Breast epithelium (tissue), 4 donors: ENCODE measurements at regions of chr1 and their contacts with region 1.

Region 1: DNA sequence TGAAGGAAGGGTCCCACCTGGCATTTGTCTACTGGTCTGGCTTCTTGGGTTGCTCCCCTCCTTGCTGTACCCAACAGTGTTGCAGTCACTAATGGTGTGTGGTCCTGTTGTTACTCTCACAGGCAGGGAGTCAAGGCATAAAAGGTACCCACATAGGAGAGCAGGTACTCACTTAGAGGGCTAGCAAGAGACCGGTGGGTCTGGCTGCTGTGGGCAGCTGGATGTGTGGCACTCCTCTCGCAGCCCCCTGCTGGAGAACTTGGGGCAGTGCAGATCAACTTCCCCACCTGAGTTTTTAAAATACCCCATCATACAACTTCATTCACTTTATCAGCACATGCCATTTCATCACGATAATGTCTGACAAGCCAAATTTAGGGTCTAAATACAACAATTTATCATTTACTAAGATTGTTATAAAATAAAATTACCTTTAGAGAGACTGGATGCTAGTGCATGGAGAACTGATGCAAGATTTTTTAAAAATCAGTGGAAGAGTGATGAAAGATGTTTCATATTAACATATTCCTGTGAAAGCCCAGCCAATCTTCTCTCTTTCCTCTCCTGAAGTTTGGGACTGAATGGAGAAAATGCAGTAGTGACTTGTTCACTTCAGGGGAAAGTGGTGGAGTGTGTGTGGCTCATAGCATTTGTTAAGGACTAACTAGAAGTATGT is 42.8 kb downstream of the ACP6 start:
- DNase-seq: no peak
- H3K4me3 ChIP-seq: no peak overlapping the region
- H3K27ac ChIP-seq: no peak overlapping the region
- H3K4me1 ChIP-seq: no peaks in the 10 kb centered on the region
- H3K27me3 ChIP-seq: no peaks in the 10 kb centered on the region
- CTCF ChIP-seq: peak; percentile 76 to 79 (median 79)
- POLR2A ChIP-seq: no peak

Region 2: DNA sequence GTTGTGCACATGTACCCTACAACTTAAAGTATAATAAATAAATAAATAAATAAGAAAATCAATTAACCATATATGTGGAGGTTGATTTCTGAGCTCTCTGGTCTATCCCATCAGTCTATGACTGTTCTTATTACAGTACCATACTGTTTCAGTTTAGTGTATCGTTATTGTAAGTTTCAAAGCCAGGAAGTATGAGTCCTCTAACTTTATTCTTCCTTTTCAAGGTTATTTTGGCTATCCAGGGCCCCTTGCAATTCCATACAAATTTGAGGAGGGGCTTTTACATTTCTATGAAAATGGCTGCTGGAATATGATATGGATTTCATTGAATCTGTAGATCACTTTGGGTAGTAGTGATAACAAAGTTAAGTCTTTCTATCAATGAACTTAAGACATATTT is 183.2 kb before region 1 on chr1:
- intact Hi-C with region 1: no loop called
- DNase-seq: no peak
- H3K4me3 ChIP-seq: no peak overlapping the region
- H3K27ac ChIP-seq: no peak overlapping the region
- H3K4me1 ChIP-seq: no peaks in the 10 kb centered on the region
- H3K27me3 ChIP-seq: no peaks in the 10 kb centered on the region
- CTCF ChIP-seq: no peak
- POLR2A ChIP-seq: no peak

Region 3: GRCh38 chr1:147504801-147505311 is 122.7 kb before region 1 on chr1:
- intact Hi-C with region 1: loop called (anchors 10 kb)
- DNase-seq: no peak
- H3K4me3 ChIP-seq: peak overlapping the region in 1 of 3 donors; percentile 49
- H3K27ac ChIP-seq: peak overlapping the region in 1 of 2 donors; percentile 49
- H3K4me1 ChIP-seq: no peaks in the 10 kb centered on the region
- H3K27me3 ChIP-seq: no peaks in the 10 kb centered on the region
- CTCF ChIP-seq: no peak
- POLR2A ChIP-seq: no peak

Region 4: GRCh38 chr1:147611021-147611426 is 16.5 kb before region 1 on chr1:
- intact Hi-C with region 1: no loop called
- DNase-seq: no peak
- H3K4me3 ChIP-seq: no peak overlapping the region
- H3K27ac ChIP-seq: no peak overlapping the region
- H3K4me1 ChIP-seq: no peaks in the 10 kb centered on the region
- H3K27me3 ChIP-seq: no peaks in the 10 kb centered on the region
- CTCF ChIP-seq: no peak
- POLR2A ChIP-seq: no peak